ENCODE measurements at regions of chr18 and their contacts with region 1.

Region 1: DNA sequence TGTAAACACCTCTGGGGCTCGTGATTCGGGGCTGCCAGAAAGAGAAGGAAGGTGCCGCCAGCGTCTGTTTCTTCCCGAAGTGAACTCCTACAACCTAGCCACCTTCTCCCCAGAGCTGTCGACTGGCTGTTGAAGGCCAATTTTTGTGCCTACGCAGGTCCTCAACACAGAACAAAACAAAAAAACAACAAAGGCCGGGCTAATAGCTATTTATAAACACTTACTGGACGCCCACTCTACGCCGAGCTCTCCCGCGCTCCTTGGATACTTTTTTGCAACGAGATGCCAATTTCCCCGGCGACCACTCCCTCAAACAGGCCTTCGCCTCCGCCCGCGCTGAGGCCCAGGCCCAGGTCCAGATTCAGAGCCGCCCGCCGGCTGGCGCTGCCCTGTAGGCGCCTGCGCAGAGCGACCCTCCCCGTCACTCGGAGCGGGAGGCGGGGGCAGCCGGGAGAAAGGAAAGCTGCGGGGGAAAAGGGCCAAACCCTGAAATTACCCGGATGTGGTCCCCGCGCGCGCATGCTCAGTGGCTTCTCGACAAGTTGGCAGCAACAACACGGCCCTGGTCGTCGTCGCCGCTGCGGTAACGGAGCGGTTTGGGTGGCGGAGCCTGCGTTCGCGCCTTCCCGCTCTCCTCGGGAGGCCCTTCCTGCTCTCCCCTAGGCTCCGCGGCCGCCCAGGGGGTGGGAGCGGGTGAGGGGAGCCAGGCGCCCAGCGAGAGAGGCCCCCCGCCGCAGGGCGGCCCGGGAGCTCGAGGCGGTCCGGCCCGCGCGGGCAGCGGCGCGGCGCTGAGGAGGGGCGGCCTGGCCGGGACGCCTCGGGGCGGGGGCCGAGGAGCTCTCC is at the start of gene SMAD4:
- DNase-seq: peak; percentile 98
- H3K4me3 Mint-ChIP-seq: peak within 1 kb of the TSS; percentile 93
- H3K27ac Mint-ChIP-seq: peak within 1 kb of the TSS; percentile 92
- H3K4me1 Mint-ChIP-seq: peaks cover 32% of the 10 kb centered on the region
- H3K27me3 Mint-ChIP-seq: no peaks in the 10 kb centered on the region
- CTCF ChIP-seq: no peak
- total RNA-seq, gene SMAD4: 78.6 and 96.7 TPM in 2 replicates

Region 2: DNA sequence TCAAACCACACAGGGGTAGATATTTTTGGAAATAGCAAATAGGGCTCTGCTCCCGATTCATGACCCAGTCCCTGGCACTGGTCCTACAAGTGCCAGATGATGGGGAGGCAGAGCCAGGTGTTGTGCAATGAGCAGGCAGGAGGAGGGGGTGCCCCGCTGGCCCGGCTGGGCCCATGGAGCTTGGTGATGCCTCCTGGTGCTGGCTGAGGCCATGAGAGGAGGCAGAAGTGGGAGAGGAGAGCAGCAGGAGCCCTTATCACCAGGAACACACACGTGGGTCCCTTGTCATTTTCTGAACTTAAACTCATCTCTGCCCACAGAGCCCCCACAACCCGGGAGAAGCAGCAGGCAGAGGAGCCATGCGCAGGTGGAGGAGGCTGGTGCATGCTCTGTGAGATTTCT is 560.5 kb before region 1 on chr18:
- CTCF ChIA-PET with region 1: no interaction called
- intact Hi-C with region 1: no loop called
- DNase-seq: no peak
- H3K4me3 Mint-ChIP-seq: no peak overlapping the region
- H3K27ac Mint-ChIP-seq: no peak overlapping the region
- H3K4me1 Mint-ChIP-seq: no peaks in the 10 kb centered on the region
- H3K27me3 Mint-ChIP-seq: peaks cover 97% of the 10 kb centered on the region
- CTCF ChIP-seq: no peak

Region 3: GRCh38 chr18:50707855-50708469 is 322.0 kb before region 1 on chr18:
- CTCF ChIA-PET with region 1: no interaction called
- intact Hi-C with region 1: no loop called
- DNase-seq: no peak
- H3K4me3 Mint-ChIP-seq: no peak overlapping the region
- H3K27ac Mint-ChIP-seq: no peak overlapping the region
- H3K4me1 Mint-ChIP-seq: no peaks in the 10 kb centered on the region
- H3K27me3 Mint-ChIP-seq: peaks cover 90% of the 10 kb centered on the region
- CTCF ChIP-seq: no peak

Region 4: DNA sequence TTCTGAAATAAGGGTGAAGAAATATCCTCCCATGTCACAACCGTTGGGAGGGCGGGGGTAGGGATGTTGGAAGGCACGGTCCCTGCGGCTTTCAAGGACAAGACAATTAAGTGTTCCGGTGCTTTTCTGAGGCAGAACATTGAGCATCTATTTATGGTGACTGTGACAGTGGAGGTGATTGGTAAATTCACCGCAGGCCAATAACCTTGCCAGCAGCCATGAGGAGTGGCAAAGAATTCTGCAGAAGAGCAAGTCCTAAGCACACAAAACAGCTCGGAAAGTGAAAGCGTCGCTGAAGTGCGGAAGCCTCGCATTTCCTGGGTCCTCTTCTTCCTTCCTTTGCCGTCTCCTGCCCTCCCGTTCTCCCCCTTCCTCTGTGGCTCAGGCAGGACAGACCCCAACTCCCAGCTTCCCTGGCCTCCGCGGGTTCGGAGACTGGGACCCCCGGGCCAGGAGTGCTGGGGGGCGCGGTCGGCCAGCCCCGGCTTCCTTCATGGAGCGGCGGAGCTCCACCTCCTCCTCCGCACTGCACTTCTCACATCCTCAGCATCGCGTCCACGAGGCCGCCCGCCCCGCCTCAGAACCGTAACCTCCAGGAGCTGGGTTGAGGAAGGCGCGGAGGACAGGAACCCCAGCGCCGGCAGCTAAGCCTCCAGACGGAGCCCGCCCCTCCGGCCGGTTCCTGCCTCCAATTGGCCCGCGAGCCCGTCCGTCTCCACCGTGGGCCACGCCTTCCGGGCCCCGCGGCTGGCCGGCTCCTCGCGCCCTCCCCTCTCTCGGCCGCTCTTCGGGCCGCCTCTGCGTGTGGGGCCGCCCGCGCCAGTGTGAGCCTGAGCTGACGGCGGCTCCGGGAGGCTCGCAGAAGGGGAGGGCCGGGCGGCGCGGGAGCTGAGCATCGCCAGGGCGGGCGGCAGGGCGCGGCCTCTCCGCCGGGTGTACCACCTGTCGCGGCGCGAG is 151.3 kb before region 1 on chr18 and contains the start of gene ME2:
- CTCF ChIA-PET with region 1: no interaction called
- intact Hi-C with region 1: loop called (anchors 5 kb)
- DNase-seq: peak; percentile 95
- H3K4me3 Mint-ChIP-seq: peak within 1 kb of the TSS; percentile 100
- H3K27ac Mint-ChIP-seq: peak within 1 kb of the TSS; percentile 82
- H3K4me1 Mint-ChIP-seq: peaks cover 10% of the 10 kb centered on the region
- H3K27me3 Mint-ChIP-seq: no peaks in the 10 kb centered on the region
- CTCF ChIP-seq: no peak
- total RNA-seq, gene ME2: 45.6 and 46.1 TPM in 2 replicates

Region 5: GRCh38 chr18:50973367-50974126 is 56.4 kb before region 1 on chr18:
- CTCF ChIA-PET with region 1: no interaction called
- intact Hi-C with region 1: loop called (anchors 5 kb)
- DNase-seq: peak; percentile 39
- H3K4me3 Mint-ChIP-seq: no peak overlapping the region
- H3K27ac Mint-ChIP-seq: no peak overlapping the region
- H3K4me1 Mint-ChIP-seq: peaks cover 42% of the 10 kb centered on the region
- H3K27me3 Mint-ChIP-seq: no peaks in the 10 kb centered on the region
- CTCF ChIP-seq: no peak

Region 6: DNA sequence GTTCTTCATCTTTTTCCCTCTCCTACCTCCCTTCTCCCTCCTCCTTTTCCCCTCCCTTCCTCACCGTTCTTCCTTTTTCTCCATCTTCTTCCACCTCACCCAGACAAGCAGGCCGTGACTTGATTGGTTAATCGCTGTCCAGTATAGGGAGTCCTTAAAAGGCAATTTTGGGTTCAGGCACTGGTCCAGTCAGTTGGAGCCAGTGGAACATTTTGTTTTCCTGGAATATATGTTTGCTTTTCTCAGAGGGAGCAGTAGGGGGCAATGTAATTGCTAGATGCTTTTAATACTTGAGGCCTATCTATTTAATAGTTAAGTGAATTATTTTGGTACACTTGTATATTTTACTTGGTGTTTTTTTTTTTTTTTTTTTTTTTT is 47.1 kb before region 1 on chr18:
- CTCF ChIA-PET with region 1: no interaction called
- intact Hi-C with region 1: loop called (anchors 5 kb)
- DNase-seq: no peak
- H3K4me3 Mint-ChIP-seq: no peak overlapping the region
- H3K27ac Mint-ChIP-seq: no peak overlapping the region
- H3K4me1 Mint-ChIP-seq: peaks cover 17% of the 10 kb centered on the region
- H3K27me3 Mint-ChIP-seq: no peaks in the 10 kb centered on the region
- CTCF ChIP-seq: no peak

Region 7: GRCh38 chr18:51153659-51154371 is 123.9 kb after region 1 on chr18:
- CTCF ChIA-PET with region 1: no interaction called
- intact Hi-C with region 1: no loop called
- DNase-seq: no peak
- H3K4me3 Mint-ChIP-seq: no peak overlapping the region
- H3K27ac Mint-ChIP-seq: no peak overlapping the region
- H3K4me1 Mint-ChIP-seq: peaks cover 17% of the 10 kb centered on the region
- H3K27me3 Mint-ChIP-seq: no peaks in the 10 kb centered on the region
- CTCF ChIP-seq: no peak

Measured in Calu3 (cell line).